Posterior vena cava (tissue), 2 donors: ENCODE measurements at regions of chr10 and their contacts with region 1.

Region 1: DNA sequence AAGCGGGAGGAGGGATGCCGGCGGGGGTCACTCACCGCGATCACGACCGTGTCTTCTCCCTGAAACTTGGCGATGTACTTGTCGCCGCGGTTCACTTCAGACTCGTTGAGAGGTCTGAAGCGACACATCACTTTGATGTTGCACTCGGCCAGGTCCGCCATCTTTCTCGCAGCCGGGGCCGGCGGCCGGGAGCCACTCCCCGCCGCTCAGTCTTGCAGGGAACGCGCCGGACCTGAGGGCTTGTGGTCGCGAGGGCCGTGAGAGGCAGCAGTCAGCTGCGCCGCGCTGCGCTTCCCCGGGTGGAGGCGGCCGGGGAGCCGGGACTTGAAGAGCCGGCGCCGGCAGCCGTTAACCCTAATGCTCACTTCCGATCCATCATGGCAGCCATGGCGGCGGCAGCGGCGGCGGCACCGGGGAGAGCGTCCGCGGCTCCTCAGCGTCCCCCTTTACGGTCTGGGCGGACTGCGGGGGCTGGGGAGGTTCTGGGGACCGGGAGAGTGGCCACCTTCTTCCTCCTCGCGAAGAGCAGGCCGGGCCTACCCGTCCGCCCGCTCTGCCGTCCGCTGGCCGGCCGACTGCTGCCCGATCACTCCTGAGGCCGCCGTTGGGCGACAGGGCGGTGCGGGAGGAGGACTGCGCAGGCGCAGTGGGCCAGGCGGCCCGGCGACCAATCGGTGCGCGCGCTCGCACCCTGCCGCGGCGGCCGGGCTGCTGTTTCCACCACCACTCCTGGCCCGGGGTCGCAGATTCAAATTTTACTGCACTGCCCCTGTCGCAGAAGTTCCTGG is at the start of gene KIF5B:
- DNase-seq: peak; percentile 97
- total RNA-seq, gene KIF5B: 171 to 225 TPM

Region 2: GRCh38 chr10:32077896-32078485 is 22.0 kb after region 1 on chr10:
- intact Hi-C with region 1: no loop called
- DNase-seq: peak; percentile 87

Region 3: DNA sequence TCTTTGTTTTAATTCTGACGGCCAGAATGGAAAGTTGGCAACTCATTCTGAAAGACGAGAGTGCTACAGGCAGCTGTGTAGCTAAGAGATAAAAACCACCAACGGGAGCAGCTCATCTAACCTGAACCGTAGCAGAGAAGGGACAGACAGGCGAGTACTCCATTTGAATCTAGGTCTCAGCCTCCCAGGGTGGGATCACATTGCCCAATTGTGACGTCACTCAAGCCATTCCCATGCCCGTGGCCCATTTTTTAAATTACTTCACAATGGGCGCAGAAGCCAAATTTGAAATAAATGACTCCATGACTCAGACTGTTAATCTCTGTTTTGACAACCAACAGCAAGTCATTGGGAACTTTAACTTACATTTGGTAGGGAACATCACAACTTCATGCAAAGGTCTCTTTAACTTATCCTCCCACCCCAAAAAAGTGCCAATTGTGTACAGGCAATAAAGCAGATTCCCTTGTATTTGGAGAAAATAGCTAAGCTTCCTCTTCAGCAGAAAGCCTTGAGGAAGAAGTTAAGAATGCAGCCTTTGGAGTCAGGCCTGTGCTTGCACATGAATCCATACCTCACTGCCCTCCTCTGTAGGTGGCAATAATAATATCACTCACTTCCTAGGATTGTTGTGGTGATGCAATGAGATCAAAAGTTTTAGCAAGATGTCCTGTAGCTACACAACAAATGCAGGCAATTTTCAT is 93.4 kb after region 1 on chr10:
- intact Hi-C with region 1: loop called in 1 of 2 experiments (anchors 5 kb)
- DNase-seq: peak; percentile 89

Region 4: DNA sequence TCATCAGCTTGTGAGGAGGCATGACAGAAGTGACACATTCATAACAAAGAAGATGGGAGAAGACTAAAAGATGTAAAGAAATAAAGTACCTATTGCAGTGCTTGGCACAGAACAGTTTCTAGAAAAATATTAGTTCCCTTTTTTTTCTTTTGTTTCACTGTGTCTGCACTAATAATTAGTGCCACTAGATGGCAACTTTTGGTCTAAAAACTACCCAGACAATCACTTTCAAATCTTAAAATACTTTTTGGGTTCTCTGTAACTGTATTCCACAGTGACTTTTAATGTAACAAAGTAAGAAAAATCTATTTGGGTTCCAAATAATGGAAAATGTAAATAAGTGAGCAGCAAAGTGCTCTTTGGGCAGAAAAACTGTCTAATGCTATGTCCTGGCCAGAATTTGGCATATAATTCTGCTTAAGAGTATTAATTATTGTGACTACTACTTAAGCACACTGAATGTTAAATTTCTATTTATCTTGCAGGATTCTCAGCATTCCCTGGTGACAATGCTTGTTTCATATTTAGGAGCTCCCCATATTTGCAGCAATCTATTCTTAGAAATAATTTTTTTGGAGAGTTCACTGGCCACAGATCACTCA is 135.0 kb after region 1 on chr10:
- intact Hi-C with region 1: loop called in 1 of 2 experiments (anchors 10 kb)
- DNase-seq: no peak